ENCODE measurements at regions of chr3 and their contacts with region 1.

Region 1: DNA sequence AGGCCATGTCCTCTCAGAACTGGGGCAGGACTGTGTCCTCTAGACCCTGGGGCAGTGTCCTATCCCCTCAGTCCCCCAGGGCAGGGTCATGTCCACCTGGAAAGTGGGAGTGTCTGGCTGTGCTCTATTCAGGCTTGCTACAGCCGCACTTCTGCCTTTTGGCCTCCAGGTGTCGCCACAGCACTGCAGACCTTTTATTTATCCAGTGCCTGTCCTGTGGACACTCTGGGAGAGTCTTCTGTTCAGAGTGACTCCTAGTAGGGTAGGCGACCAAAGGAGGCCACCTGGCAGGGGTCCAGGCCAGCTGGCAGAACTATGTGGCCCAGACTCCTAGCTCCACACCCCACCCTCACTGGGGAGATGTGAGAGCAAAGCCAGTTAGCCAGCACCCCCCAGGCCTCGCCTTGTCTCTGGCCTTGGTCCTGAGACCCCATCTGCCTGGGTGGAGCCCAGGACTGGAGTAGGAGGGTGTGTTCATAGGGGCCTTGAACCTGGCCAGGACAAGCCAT is 3.9 kb downstream of the TMIE start:
- DNase-seq: peak; percentile 80
- ATAC-seq: peak; percentile 89
- H3K4me3 ChIP-seq: no peak overlapping the region
- H3K27ac ChIP-seq: no peak overlapping the region
- H3K4me1 ChIP-seq: peaks cover 13% of the 10 kb centered on the region
- H3K27me3 ChIP-seq: peaks cover 13% of the 10 kb centered on the region
- CTCF ChIP-seq: peak; percentile 98

Region 2: GRCh38 chr3:46500656-46501635 is 204.1 kb before region 1 on chr3:
- intact Hi-C with region 1: no loop called
- DNase-seq: no peak
- ATAC-seq: no peak
- H3K4me3 ChIP-seq: no peak overlapping the region
- H3K27ac ChIP-seq: no peak overlapping the region
- H3K4me1 ChIP-seq: peaks cover 4% of the 10 kb centered on the region
- H3K27me3 ChIP-seq: no peaks in the 10 kb centered on the region
- CTCF ChIP-seq: no peak

Region 3: GRCh38 chr3:46578973-46579755 is 125.9 kb before region 1 on chr3:
- intact Hi-C with region 1: no loop called
- DNase-seq: no peak
- ATAC-seq: no peak
- H3K4me3 ChIP-seq: no peak overlapping the region
- H3K27ac ChIP-seq: no peak overlapping the region
- H3K4me1 ChIP-seq: peaks cover 4% of the 10 kb centered on the region
- H3K27me3 ChIP-seq: no peaks in the 10 kb centered on the region
- CTCF ChIP-seq: no peak

Region 4: GRCh38 chr3:46895204-46895660 is 190.2 kb after region 1 on chr3:
- intact Hi-C with region 1: loop called (anchors 5 kb)
- DNase-seq: peak; percentile 89
- ATAC-seq: peak; percentile 61
- H3K4me3 ChIP-seq: no peak overlapping the region
- H3K27ac ChIP-seq: no peak overlapping the region
- H3K4me1 ChIP-seq: peaks cover 28% of the 10 kb centered on the region
- H3K27me3 ChIP-seq: peaks cover 7% of the 10 kb centered on the region
- CTCF ChIP-seq: peak; percentile 88

Region 5: DNA sequence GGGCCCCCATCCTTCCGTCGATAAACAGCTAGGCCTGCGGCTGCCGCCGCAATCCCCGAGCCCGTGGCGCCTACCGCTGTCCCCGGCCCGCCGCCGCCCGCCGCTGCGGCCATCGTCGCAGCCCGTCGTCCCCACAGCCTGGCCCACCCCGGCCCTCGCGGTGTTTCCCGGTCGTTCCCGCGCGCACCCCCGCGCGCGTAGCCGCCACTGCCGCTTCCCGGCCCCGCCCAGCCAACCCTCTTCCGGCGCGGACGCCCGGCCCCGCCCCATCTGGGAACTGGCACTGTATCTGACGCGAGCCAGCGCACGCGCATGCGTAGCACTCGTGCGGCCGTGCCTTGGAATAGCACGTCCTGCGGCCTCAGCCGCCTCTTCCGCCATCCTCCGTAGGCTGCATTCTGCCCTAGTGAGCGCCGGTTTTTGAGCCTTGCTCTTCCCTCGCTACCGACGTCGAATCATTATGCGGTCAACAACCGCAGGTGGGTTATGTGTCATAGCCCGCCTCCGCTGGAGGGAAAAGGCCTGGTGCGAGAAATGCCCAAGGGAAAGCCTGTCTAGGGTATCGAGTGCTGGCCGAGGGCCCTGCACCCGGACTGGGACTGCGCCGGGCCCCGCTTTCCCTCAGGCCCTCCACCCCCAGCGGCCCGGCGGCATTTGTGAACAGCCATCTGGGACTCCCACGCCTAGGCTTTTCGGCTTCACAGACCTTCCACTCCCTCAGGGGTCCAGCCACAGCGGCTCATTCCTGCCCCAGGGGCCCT is 1076.8 kb after region 1 on chr3 and contains the start of gene SMARCC1:
- intact Hi-C with region 1: no loop called
- DNase-seq: peak; percentile 99
- ATAC-seq: peak; percentile 98
- H3K4me3 ChIP-seq: peak within 1 kb of the TSS; percentile 82
- H3K27ac ChIP-seq: peak within 1 kb of the TSS; percentile 99
- H3K4me1 ChIP-seq: peaks cover 29% of the 10 kb centered on the region
- H3K27me3 ChIP-seq: no peaks in the 10 kb centered on the region
- CTCF ChIP-seq: peak; percentile 13
- total RNA-seq, gene SMARCC1: 67.9 TPM